ENCODE measurements at regions of chrX and their contacts with region 1.

Region 1: DNA sequence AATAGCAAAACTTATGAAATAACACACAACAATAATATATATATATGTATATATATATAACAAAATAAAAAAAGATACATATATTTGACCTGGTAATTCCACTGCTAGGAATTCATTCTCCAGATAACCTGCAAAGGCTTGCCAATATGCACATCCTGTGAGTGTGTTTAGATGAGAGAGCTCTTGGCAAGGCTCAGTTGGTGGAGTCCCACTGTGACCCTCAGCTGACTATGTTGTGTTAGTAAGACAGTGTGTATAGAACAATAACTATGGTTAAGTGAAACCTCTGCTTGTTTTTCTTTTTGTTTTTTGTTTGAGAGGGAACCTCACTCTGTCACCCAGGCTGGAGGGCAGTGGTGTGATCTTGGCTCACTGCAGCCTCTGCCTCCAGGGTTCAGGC is 39.5 kb upstream of the RBMX start:
- DNase-seq: no peak
- H3K4me3 ChIP-seq: no peak overlapping the region
- H3K4me3 Mint-ChIP-seq: no peak overlapping the region
- H3K27ac ChIP-seq: no peak overlapping the region
- H3K27ac Mint-ChIP-seq: no peak overlapping the region
- H3K4me1 ChIP-seq: no peaks in the 10 kb centered on the region
- H3K4me1 Mint-ChIP-seq: peaks cover under 1% of the 10 kb centered on the region
- H3K27me3 ChIP-seq: no peaks in the 10 kb centered on the region
- H3K27me3 Mint-ChIP-seq: peaks cover 0 to 6% (median 0%) of the 10 kb centered on the region in 3 donors
- CTCF ChIP-seq: no peak

Region 2: DNA sequence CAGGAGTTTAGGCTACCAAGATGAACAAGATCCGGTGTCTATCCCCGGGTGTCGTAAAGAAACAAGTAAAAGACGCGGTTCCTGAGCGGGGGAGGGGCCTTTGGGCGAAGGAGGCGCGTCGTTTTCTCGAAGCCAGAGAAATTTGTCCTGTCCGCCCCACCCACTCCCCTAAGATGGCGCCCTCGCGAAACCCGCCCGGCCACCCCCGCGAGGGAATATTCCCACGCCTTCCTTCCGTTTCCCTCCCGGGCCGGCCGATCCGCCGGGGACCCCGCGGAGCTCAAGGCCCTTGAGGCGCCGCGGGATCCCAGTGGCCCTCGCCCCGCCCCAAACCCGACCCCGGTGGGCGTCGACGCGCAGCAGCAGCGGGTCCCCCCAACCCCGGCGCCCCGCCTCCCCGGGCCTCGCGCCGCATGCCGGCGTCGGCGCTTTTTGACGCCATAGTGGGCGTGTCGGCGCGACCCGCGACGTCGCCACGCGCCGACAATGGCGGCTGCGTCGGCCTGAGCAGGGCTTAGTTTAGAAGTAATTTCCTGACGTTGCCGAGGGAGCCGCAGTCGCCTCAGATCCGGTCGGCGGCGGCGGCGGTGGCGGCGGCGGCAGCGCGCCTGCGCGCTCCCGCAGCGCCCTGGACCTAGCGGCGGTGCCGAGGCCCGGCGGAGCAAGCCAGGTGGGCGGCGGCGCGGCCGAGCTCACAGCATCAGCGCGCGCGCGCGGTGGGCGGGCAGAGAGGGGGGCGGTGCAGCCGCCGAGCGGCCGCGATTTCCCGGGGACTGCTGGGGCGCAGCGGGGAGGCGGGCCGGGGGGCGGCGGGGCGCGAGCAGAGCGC is 423.0 kb before region 1 on chrX and contains the start of gene HTATSF1:
- intact Hi-C with region 1: no loop called
- DNase-seq: peak; percentile 79 to 83 (median 82)
- H3K4me3 ChIP-seq: peak within 1 kb of the TSS; percentile 72 to 98 (median 80)
- H3K4me3 Mint-ChIP-seq: peak within 1 kb of the TSS; percentile 85 to 91
- H3K27ac ChIP-seq: peak within 1 kb of the TSS; percentile 74 to 87
- H3K27ac Mint-ChIP-seq: peak within 1 kb of the TSS; percentile 92 to 97 (median 95)
- H3K4me1 ChIP-seq: peaks cover 17 to 27% of the 10 kb centered on the region in 2 donors
- H3K4me1 Mint-ChIP-seq: peaks cover 25% of the 10 kb centered on the region
- H3K27me3 ChIP-seq: no peaks in the 10 kb centered on the region
- H3K27me3 Mint-ChIP-seq: peaks cover 0 to 6% (median 0%) of the 10 kb centered on the region in 3 donors
- CTCF ChIP-seq: no peak
- polyA plus RNA-seq, gene HTATSF1: 1.9 to 20.5 (median 14.2) TPM

Region 3: GRCh38 chrX:136608295-136609171 is 311.5 kb before region 1 on chrX:
- intact Hi-C with region 1: loop called in 1 of 2 experiments (anchors 10 kb)
- DNase-seq: peak; percentile 14 to 25 (median 15)
- H3K4me3 ChIP-seq: no peak overlapping the region
- H3K4me3 Mint-ChIP-seq: no peak overlapping the region
- H3K27ac ChIP-seq: no peak overlapping the region
- H3K27ac Mint-ChIP-seq: peak overlapping the region in 1 of 7 donors; percentile 21
- H3K4me1 ChIP-seq: no peaks in the 10 kb centered on the region
- H3K4me1 Mint-ChIP-seq: peaks cover 8% of the 10 kb centered on the region
- H3K27me3 ChIP-seq: no peaks in the 10 kb centered on the region
- H3K27me3 Mint-ChIP-seq: peaks cover 0 to 11% (median 0%) of the 10 kb centered on the region in 3 donors
- CTCF ChIP-seq: peak; percentile 46

Region 4: DNA sequence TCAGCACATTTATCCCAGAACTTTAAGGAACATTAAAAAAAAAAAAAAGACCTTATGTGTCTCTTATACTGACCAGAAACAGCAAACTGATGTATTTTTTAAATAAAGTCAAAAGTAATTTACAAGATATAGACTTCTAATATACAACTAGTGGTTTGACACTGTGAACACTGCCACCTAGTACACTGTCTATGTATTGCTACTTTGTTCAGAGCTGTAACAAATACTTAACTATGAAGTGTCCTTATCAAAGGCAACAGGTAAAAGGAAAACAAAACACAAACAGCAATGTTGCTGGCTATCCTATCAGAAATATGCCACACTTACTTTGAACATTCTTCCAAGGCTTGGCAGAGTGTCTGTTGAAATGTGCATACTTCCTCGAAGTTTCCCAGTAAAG is 211.7 kb before region 1 on chrX:
- intact Hi-C with region 1: loop called in 1 of 2 experiments (anchors 5 kb)
- DNase-seq: no peak
- H3K4me3 ChIP-seq: no peak overlapping the region
- H3K4me3 Mint-ChIP-seq: no peak overlapping the region
- H3K27ac ChIP-seq: no peak overlapping the region
- H3K27ac Mint-ChIP-seq: no peak overlapping the region
- H3K4me1 ChIP-seq: peaks cover 9% of the 10 kb centered on the region in 2 donors
- H3K4me1 Mint-ChIP-seq: peaks cover 14% of the 10 kb centered on the region
- H3K27me3 ChIP-seq: no peaks in the 10 kb centered on the region
- H3K27me3 Mint-ChIP-seq: peaks cover 0 to 3% (median 0%) of the 10 kb centered on the region in 3 donors
- CTCF ChIP-seq: peak; percentile 28

Region 5: DNA sequence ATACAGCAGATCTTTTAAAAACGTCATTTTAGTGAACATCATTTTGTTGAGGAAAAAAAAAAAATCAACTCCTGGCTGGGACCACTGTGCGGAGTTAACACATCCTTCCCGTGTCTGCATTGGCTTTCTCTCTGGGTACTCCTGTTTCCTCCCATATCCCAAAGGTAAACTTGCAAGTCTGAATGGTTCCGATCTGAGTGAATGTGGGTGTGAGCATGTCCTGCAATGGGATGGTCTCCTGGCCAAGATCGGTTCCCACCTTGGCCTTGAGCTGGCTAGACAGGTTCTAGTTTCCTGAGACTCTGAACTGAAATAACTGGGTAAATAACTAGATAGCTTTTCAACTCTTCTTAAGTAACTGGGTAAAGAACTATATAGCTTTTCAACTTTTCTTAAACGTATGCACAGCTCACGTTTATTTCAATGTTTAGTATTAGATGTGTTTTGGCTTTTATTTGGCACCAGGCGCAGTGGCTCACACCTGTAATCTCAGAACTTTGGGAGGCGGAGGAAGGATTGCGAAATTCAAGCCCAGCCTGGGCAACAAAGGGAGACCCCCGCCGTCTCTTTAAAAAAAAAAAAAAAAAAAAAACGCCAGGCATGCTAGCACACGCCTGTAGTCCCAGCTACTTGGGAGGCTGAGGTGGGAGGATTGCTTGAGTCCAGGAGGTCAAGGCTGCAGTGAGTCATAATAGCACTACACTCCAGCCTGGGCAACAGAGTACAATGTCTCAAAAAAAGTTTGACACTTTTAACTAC is 53.5 kb before region 1 on chrX:
- intact Hi-C with region 1: no loop called
- DNase-seq: no peak
- H3K4me3 ChIP-seq: no peak overlapping the region
- H3K4me3 Mint-ChIP-seq: no peak overlapping the region
- H3K27ac ChIP-seq: no peak overlapping the region
- H3K27ac Mint-ChIP-seq: peak overlapping the region in 2 of 7 donors; percentile 4 to 76
- H3K4me1 ChIP-seq: peaks cover 0 to 2% of the 10 kb centered on the region in 2 donors
- H3K4me1 Mint-ChIP-seq: peaks cover 9% of the 10 kb centered on the region
- H3K27me3 ChIP-seq: no peaks in the 10 kb centered on the region
- H3K27me3 Mint-ChIP-seq: peaks cover 0 to 1% (median 0%) of the 10 kb centered on the region in 3 donors
- CTCF ChIP-seq: no peak

Measured in CD14-positive monocyte (primary cell).